CD8-positive, alpha-beta memory T cell (primary cell): ENCODE measurements at regions of chr20 and their contacts with region 1.

Region 1: GRCh38 chr20:4082406-4083097 is 67.2 kb upstream of the RNF24 start:
- DNase-seq: peak in 3 of 5 donors; percentile 12 to 64 (median 60)
- H3K4me3 ChIP-seq: peak overlapping the region; percentile 18
- H3K4me3 Mint-ChIP-seq: peak overlapping the region in 6 of 7 donors; percentile 28 to 87 (median 56)
- H3K27ac ChIP-seq: peak overlapping the region; percentile 57
- H3K27ac Mint-ChIP-seq: peak overlapping the region; percentile 45 to 96 (median 79)
- H3K4me1 ChIP-seq: peaks cover 28% of the 10 kb centered on the region
- H3K4me1 Mint-ChIP-seq: peaks cover 35 to 50% (median 49%) of the 10 kb centered on the region in 3 donors
- H3K27me3 ChIP-seq: no peaks in the 10 kb centered on the region
- H3K27me3 Mint-ChIP-seq: peaks cover 0 to 4% of the 10 kb centered on the region in 2 donors

Region 2: DNA sequence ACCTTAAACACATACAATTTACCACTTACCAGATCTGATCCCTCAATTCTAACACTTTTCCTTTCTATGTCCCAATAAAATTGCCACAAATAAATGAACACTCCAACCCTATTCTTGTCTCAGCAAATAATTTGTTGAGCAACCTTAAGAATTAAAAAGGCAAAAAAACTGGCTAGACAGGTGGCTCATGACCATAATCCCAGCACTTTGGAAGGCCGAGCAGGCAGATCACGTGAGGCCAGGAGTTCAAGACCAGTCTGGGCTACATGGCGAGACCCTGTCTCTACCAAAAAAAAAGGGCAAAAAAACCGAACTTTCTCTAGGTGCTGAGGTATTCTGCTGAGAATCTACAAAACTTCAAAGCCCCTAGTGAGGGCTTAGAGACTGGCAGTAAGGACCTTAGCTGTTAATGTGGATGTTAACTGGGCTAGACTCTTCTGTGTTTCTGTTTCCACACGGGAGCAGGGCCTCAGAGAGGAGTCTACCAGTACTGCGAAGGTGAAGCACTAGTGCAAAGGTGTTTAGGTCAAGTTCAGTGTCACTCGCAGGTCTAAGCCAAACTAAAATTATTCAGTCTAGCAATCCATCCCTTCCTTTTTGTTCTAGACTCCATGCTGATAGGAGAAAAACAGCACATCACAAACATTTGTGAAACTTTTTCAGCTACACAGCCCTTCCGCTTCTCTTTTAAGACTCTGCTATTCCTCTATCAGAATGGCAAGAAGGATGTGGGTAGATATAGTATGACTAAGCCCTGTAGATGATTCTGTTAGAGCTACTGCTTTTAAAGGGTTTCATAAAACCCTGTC is 925.5 kb before region 1 on chr20:
- CTCF ChIA-PET with region 1: no interaction called
- POLR2A ChIA-PET with region 1: no interaction called
- DNase-seq: peak in 1 of 5 donors; percentile 48
- H3K4me3 ChIP-seq: no peak overlapping the region
- H3K4me3 Mint-ChIP-seq: peak overlapping the region; percentile 65 to 99 (median 89)
- H3K27ac ChIP-seq: peak overlapping the region; percentile 29
- H3K27ac Mint-ChIP-seq: peak overlapping the region; percentile 73 to 96 (median 82)
- H3K4me1 ChIP-seq: peaks cover 38% of the 10 kb centered on the region
- H3K4me1 Mint-ChIP-seq: peaks cover 50 to 75% (median 64%) of the 10 kb centered on the region in 3 donors
- H3K27me3 ChIP-seq: no peaks in the 10 kb centered on the region
- H3K27me3 Mint-ChIP-seq: no peaks in the 10 kb centered on the region

Region 3: GRCh38 chr20:3677733-3678132 is 404.8 kb before region 1 on chr20:
- CTCF ChIA-PET with region 1: interaction called, 10 read pairs
- POLR2A ChIA-PET with region 1: no interaction called
- DNase-seq: no peak
- H3K4me3 ChIP-seq: no peak overlapping the region
- H3K4me3 Mint-ChIP-seq: no peak overlapping the region
- H3K27ac ChIP-seq: no peak overlapping the region
- H3K27ac Mint-ChIP-seq: no peak overlapping the region
- H3K4me1 ChIP-seq: no peaks in the 10 kb centered on the region
- H3K4me1 Mint-ChIP-seq: peaks cover 0 to 20% (median 8%) of the 10 kb centered on the region in 3 donors
- H3K27me3 ChIP-seq: peaks cover 11% of the 10 kb centered on the region
- H3K27me3 Mint-ChIP-seq: peaks cover 46 to 61% of the 10 kb centered on the region in 2 donors

Region 4: GRCh38 chr20:3993109-3993508 is 89.4 kb before region 1 on chr20:
- CTCF ChIA-PET with region 1: interaction called, 10 read pairs
- POLR2A ChIA-PET with region 1: no interaction called
- DNase-seq: no peak
- H3K4me3 ChIP-seq: no peak overlapping the region
- H3K4me3 Mint-ChIP-seq: peak overlapping the region in 2 of 7 donors; percentile 9 to 23
- H3K27ac ChIP-seq: no peak overlapping the region
- H3K27ac Mint-ChIP-seq: peak overlapping the region in 2 of 8 donors; percentile 23 to 57
- H3K4me1 ChIP-seq: peaks cover 43% of the 10 kb centered on the region
- H3K4me1 Mint-ChIP-seq: peaks cover 33 to 68% (median 65%) of the 10 kb centered on the region in 3 donors
- H3K27me3 ChIP-seq: no peaks in the 10 kb centered on the region
- H3K27me3 Mint-ChIP-seq: no peaks in the 10 kb centered on the region

Region 5: GRCh38 chr20:4014031-4014474 is 68.5 kb before region 1 on chr20:
- CTCF ChIA-PET with region 1: interaction called, 65 read pairs
- POLR2A ChIA-PET with region 1: interaction called, 4 read pairs
- DNase-seq: peak in 3 of 5 donors; percentile 11 to 55 (median 38)
- H3K4me3 ChIP-seq: peak overlapping the region; percentile 79
- H3K4me3 Mint-ChIP-seq: peak overlapping the region; percentile 79 to 92 (median 91)
- H3K27ac ChIP-seq: peak overlapping the region; percentile 65
- H3K27ac Mint-ChIP-seq: peak overlapping the region; percentile 0 to 95 (median 74)
- H3K4me1 ChIP-seq: peaks cover 24% of the 10 kb centered on the region
- H3K4me1 Mint-ChIP-seq: peaks cover 25 to 52% (median 37%) of the 10 kb centered on the region in 3 donors
- H3K27me3 ChIP-seq: no peaks in the 10 kb centered on the region
- H3K27me3 Mint-ChIP-seq: peaks cover 0 to 2% of the 10 kb centered on the region in 2 donors

Region 6: GRCh38 chr20:4147319-4147718 is 64.8 kb after region 1 on chr20:
- CTCF ChIA-PET with region 1: no interaction called
- POLR2A ChIA-PET with region 1: no interaction called
- DNase-seq: no peak
- H3K4me3 ChIP-seq: no peak overlapping the region
- H3K4me3 Mint-ChIP-seq: peak overlapping the region in 6 of 7 donors; percentile 19 to 62 (median 48)
- H3K27ac ChIP-seq: no peak overlapping the region
- H3K27ac Mint-ChIP-seq: no peak overlapping the region
- H3K4me1 ChIP-seq: peaks cover 8% of the 10 kb centered on the region
- H3K4me1 Mint-ChIP-seq: peaks cover 7 to 16% (median 11%) of the 10 kb centered on the region in 3 donors
- H3K27me3 ChIP-seq: peaks cover 3% of the 10 kb centered on the region
- H3K27me3 Mint-ChIP-seq: peaks cover 39 to 51% of the 10 kb centered on the region in 2 donors

Region 7: DNA sequence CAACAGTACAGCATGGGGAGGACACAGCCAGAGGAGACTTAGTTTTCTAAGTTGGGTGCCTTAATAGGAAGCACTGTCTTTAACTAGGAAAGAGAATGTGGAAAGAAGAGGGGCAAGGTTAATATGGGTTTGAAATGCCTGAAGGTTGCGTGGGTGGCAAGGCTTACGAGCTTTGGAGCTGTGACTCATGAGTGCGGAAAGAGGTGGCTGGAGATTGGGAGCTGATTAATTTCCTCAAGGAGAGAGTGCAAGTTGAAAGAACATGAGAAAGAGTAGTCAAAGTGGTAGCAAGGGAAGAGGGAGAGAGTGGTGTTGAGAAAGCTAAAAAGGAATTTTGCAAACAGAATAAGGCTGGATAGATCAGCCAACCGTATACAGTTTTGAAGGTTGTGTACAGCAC is 324.1 kb after region 1 on chr20:
- CTCF ChIA-PET with region 1: no interaction called
- POLR2A ChIA-PET with region 1: no interaction called
- DNase-seq: no peak
- H3K4me3 ChIP-seq: no peak overlapping the region
- H3K4me3 Mint-ChIP-seq: no peak overlapping the region
- H3K27ac ChIP-seq: no peak overlapping the region
- H3K27ac Mint-ChIP-seq: no peak overlapping the region
- H3K4me1 ChIP-seq: no peaks in the 10 kb centered on the region
- H3K4me1 Mint-ChIP-seq: no peaks in the 10 kb centered on the region
- H3K27me3 ChIP-seq: peaks cover 15% of the 10 kb centered on the region
- H3K27me3 Mint-ChIP-seq: peaks cover 0 to 21% of the 10 kb centered on the region in 2 donors